ENCODE measurements at regions of chr22 and their contacts with region 1.

Region 1: GRCh38 chr22:37229805-37230672 is 14.0 kb downstream of the RAC2 start:
- DNase-seq: peak; percentile 94
- H3K4me3 Mint-ChIP-seq: peak overlapping the region; percentile 45
- H3K27ac Mint-ChIP-seq: peak overlapping the region; percentile 97
- H3K4me1 Mint-ChIP-seq: peaks cover 90% of the 10 kb centered on the region
- H3K27me3 Mint-ChIP-seq: no peaks in the 10 kb centered on the region

Region 2: GRCh38 chr22:37166675-37167066 is 63.4 kb before region 1 on chr22:
- CTCF ChIA-PET with region 1: interaction called, 3 read pairs
- POLR2A ChIA-PET with region 1: interaction called, 22 read pairs
- DNase-seq: peak; percentile 87
- H3K4me3 Mint-ChIP-seq: peak overlapping the region; percentile 71
- H3K27ac Mint-ChIP-seq: peak overlapping the region; percentile 94
- H3K4me1 Mint-ChIP-seq: peaks cover 85% of the 10 kb centered on the region
- H3K27me3 Mint-ChIP-seq: no peaks in the 10 kb centered on the region

Region 3: GRCh38 chr22:37218771-37219411 is 11.1 kb before region 1 on chr22:
- CTCF ChIA-PET with region 1: interaction called, 11 read pairs
- POLR2A ChIA-PET with region 1: interaction called, 113 read pairs
- DNase-seq: peak; percentile 72
- H3K4me3 Mint-ChIP-seq: peak overlapping the region; percentile 63
- H3K27ac Mint-ChIP-seq: peak overlapping the region; percentile 93
- H3K4me1 Mint-ChIP-seq: peaks cover 65% of the 10 kb centered on the region
- H3K27me3 Mint-ChIP-seq: peaks cover 1% of the 10 kb centered on the region

Region 4: DNA sequence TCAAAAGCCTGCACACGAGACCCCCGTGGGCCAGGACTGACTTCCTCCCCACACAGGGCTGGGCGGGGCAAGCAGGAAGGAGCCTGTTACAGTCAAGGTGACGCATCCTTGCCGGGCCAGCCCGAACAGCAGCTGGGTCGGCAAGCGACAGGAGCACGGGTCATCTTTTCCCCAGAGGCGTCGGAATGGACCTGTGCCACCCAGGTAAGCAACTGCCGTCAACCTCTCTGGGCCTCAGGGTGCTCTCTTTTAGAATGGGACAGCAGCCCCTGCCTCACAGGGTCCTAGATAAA is 52.3 kb after region 1 on chr22 and contains the start of gene CYTH4:
- CTCF ChIA-PET with region 1: no interaction called
- POLR2A ChIA-PET with region 1: interaction called, 10 read pairs
- DNase-seq: peak; percentile 84
- H3K4me3 Mint-ChIP-seq: peak within 1 kb of the TSS; percentile 94
- H3K27ac Mint-ChIP-seq: peak within 1 kb of the TSS; percentile 95
- H3K4me1 Mint-ChIP-seq: peaks cover 59% of the 10 kb centered on the region
- H3K27me3 Mint-ChIP-seq: peaks cover 1% of the 10 kb centered on the region
- total RNA-seq, gene CYTH4: 114 to 126 TPM

Region 5: GRCh38 chr22:37686002-37686982 is 456.3 kb after region 1 on chr22 and contains the start of gene NOL12:
- CTCF ChIA-PET with region 1: no interaction called
- POLR2A ChIA-PET with region 1: no interaction called
- DNase-seq: peak; percentile 81
- H3K4me3 Mint-ChIP-seq: peak within 1 kb of the TSS; percentile 93
- H3K27ac Mint-ChIP-seq: peak within 1 kb of the TSS; percentile 88
- H3K4me1 Mint-ChIP-seq: peaks cover 28% of the 10 kb centered on the region
- H3K27me3 Mint-ChIP-seq: no peaks in the 10 kb centered on the region
- total RNA-seq, gene NOL12: 36.6 to 36.9 TPM